ENCODE measurements at regions of chr7 and their contacts with region 1.

Region 1: GRCh38 chr7:75866489-75867389 is 12.1 kb upstream of the RHBDD2 start:
- DNase-seq: peak; percentile 66 to 70
- H3K4me3 ChIP-seq: no peak overlapping the region
- H3K4me1 ChIP-seq: no peaks in the 10 kb centered on the region
- H3K27me3 ChIP-seq: no peaks in the 10 kb centered on the region

Region 2: DNA sequence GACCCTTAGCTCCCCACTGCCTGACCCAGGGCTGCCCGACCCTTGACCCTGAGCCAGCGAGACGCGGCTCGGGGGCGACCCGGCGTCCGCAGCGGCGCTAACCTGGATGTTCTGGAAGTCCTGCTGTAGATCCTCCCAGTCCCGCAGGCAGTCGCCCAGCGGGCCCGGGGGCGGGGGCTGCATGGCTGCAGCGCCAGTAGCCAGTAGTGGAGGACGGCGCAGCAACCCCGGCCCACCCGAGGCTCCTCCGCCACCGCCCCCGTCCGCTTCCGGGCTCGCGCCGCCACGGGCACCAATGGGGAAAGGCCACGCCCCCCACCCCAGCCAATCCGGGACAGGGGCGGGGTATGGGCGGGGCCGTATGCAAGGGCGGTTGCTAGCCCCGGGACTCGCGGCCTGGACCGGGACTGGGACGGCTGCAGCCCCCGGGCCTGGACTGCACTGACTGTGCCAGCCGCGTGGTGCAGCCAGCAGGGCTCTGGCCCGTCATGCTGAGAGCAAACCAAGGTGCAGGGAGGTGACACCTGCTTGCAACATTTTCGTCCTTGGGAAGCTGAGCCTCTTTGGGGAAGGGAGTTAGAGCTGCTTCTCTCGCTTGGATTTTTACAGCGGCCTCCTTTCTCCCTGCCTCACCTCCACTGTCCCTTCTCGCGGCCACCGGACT is 127.8 kb after region 1 on chr7 and contains the start of gene TMEM120A:
- in situ Hi-C with region 1: no loop called
- DNase-seq: peak; percentile 90 to 99
- H3K4me3 ChIP-seq: peak within 1 kb of the TSS; percentile 70
- H3K4me1 ChIP-seq: peaks cover 7% of the 10 kb centered on the region
- H3K27me3 ChIP-seq: no peaks in the 10 kb centered on the region

Region 3: DNA sequence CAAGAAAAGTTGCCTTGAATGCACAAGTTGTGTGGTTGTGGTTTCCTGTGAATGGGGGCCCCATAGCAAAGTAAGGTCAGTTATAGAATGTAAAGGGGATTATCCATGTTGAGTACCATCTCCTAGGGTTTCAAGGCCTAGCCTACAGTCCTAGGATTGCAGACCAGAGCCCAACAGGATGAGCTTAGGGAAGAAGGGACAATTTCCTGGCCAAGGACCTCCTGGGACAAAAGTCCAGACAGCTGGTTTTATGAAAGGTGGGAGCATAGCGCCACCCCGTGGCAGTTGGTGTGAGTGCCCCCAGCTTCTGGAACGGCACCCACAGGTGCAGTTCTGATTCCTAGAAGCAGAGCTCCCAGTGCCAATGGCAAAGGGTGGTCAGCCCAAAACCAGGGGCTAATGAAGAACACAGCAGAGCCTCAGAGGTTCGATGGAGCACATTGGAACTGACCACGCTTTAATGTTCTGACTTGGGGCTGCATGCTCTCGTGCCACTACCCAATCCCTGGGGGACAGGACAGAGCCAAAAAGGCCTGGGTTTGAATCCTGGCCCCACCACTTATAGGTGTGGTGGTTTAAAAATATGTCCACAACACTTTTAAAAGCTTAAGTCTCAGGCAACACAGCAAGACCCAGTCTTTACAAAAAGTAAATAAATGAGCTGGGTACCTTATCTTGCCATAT is 153.4 kb after region 1 on chr7:
- in situ Hi-C with region 1: loop called (anchors 10 kb)
- DNase-seq: peak; percentile 49 to 81
- H3K4me3 ChIP-seq: no peak overlapping the region
- H3K4me1 ChIP-seq: no peaks in the 10 kb centered on the region
- H3K27me3 ChIP-seq: no peaks in the 10 kb centered on the region

Region 4: DNA sequence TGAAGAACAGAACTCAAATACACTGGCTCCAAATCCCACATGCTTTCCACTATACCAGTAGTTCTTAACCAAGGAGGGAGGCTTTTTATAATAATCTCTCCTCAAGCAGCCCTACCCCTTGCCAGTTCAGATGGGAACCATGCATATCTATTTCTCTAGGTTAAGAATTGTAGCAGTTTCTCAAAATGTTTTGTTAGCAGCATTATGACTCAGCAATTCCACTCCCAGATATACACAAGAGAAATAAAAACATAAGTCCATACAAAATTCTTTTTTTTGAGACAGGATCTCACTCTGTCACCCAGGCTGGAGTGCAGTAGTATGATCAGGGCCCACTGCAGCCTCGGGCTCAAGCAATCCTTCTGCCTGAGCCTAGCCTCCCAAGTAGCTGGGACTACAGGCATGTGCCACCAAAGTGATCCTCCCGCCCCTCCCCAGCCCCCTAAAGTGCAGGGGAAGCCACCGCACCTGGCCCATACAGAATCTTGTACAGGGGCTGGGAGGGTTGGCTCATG is 473.9 kb after region 1 on chr7:
- in situ Hi-C with region 1: no loop called
- DNase-seq: no peak
- H3K4me3 ChIP-seq: no peak overlapping the region
- H3K4me1 ChIP-seq: no peaks in the 10 kb centered on the region; the same call in 1 of the 2 replicates
- H3K27me3 ChIP-seq: no peaks in the 10 kb centered on the region